ENCODE measurements at regions of chr1 and their contacts with region 1.

Region 1: GRCh38 chr1:181479137-181479745 is 4.1 kb upstream of the CACNA1E start:
- DNase-seq: no peak
- H3K4me3 ChIP-seq: no peak overlapping the region
- H3K27ac ChIP-seq: no peak overlapping the region
- H3K4me1 ChIP-seq: peaks cover 5 to 28% (median 22%) of the 10 kb centered on the region in 4 donors
- H3K27me3 ChIP-seq: peaks cover 0 to 36% (median 24%) of the 10 kb centered on the region in 4 donors
- CTCF ChIP-seq: peak; percentile 76 to 84 (median 79)
- EP300 ChIP-seq: no peak
- POLR2A ChIP-seq: no peak

Region 2: DNA sequence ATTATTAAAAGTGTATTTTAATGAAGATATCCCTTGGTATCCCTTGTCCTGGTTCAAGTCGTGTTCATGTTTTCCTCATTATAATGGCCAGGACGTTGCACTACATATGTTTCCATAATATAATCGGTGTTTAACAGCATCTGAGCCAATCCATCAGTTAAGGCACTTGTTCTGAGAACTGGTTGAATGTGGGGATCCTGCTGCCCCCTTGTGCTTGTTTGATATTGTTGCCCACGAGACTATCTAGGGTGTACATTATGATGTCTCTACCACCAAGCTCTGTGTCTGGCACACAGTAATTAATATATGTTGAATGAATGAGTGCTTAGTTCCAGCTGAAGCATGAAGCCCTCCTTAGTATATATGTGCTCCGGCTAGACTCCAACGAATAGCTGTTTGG is 197.0 kb after region 1 on chr1:
- intact Hi-C with region 1: loop called (anchors 1 kb)
- DNase-seq: no peak
- H3K4me3 ChIP-seq: no peak overlapping the region
- H3K27ac ChIP-seq: no peak overlapping the region
- H3K4me1 ChIP-seq: no peaks in the 10 kb centered on the region
- H3K27me3 ChIP-seq: no peaks in the 10 kb centered on the region
- CTCF ChIP-seq: peak; percentile 45 to 64 (median 51)
- EP300 ChIP-seq: no peak
- POLR2A ChIP-seq: no peak

Region 3: DNA sequence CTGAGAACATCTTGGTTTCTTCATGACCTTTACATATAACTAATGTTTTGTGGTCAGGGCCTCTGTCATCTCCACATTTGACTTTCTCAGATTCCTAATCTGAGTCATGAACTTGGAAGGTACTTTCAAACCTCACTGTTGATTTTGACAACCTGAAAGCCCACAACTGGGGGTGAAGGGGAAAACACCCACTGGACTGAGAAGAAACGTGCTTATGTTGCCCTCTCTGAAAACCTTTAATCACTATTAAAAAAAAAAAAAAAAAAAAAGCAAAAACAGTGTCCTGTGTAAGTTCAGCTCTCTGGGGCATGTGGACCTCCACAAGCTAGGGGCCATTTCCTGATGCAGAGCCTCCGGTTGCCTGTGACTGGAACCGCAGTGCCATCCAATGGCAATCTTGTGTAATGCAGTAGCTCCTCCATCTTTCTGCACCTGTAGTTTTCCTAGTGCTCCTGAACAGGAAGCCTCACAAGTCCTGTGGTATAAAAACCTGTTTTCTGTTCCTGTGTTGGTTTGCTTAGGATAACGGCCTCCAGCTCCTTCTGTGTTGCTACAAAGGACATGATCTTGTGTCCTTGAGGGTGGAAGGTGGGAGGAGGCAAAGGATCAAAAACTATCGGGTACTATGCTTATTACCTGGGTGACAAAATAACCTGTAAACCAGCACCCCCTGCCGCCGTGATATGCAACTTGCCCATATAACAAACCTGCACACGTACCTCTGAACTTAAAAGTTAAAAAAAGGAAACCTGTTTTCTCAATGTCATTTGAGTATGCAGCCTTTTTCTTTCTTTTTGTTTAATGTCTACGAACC is 457.7 kb after region 1 on chr1:
- intact Hi-C with region 1: loop called (anchors 10 kb)
- DNase-seq: no peak
- H3K4me3 ChIP-seq: no peak overlapping the region
- H3K27ac ChIP-seq: no peak overlapping the region
- H3K4me1 ChIP-seq: no peaks in the 10 kb centered on the region
- H3K27me3 ChIP-seq: no peaks in the 10 kb centered on the region
- CTCF ChIP-seq: peak; percentile 13 to 40 (median 31)
- EP300 ChIP-seq: no peak
- POLR2A ChIP-seq: no peak

Measured in esophagus muscularis mucosa (tissue), 4 donors.